Activated CD4-positive, alpha-beta memory T cell treated with anti-CD3 and anti-CD28 coated beads for 36 hours (primary cell): ENCODE measurements at regions of chr19 and their contacts with region 1.

Region 1: GRCh38 chr19:58182989-58183816 is at the start of gene ZNF274:
- DNase-seq: peak; percentile 95
- H3K4me3 Mint-ChIP-seq: peak within 1 kb of the TSS; percentile 92
- H3K27ac Mint-ChIP-seq: peak within 1 kb of the TSS; percentile 99
- H3K4me1 Mint-ChIP-seq: peaks cover 16% of the 10 kb centered on the region
- H3K27me3 Mint-ChIP-seq: no peaks in the 10 kb centered on the region
- total RNA-seq, gene ZNF274: 19.1 to 19.6 TPM

Region 2: DNA sequence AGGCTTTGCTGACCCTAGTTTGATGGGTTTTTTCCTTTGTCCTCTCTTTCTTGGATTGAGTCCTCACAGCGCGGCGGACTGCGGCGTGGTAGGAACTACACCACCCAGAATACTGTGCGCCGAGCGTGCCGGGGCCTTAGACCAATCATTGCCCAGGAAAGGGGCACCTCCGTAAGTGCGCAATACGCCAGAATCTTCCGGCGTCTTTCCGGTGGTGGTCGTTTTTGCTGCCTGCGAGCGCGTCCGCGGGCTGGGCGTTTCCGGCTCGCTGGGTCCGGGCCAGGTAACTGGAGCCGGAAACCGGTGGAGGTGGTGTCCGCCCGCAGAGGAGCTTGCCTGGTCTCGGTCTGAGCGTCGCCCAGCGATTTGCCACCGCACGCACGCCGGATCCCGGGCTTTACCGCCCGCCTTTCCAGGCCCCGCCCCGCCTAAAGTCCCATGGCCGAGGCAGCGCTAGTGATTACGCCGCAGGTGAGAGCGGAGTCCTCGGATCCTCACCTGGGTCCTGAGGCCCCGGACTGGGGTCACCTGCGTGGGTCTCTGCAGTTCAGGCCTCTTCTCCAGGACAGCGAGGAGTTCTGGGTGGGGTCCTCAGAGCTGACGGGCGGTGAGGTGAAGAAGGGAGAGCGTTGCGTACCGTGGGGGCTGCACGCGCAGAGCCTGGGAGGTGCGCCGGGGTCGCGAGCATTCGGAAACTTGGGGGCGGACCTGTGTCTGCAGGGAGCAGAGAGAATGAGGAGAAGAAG is 655.9 kb before region 1 on chr19 and contains the start of gene ZNF549:
- CTCF ChIA-PET with region 1: no interaction called
- POLR2A ChIA-PET with region 1: no interaction called
- intact Hi-C with region 1: loop called (anchors 1 kb)
- DNase-seq: peak; percentile 94
- H3K4me3 Mint-ChIP-seq: peak within 1 kb of the TSS; percentile 85
- H3K27ac Mint-ChIP-seq: peak within 1 kb of the TSS; percentile 54
- H3K4me1 Mint-ChIP-seq: peaks cover 18% of the 10 kb centered on the region
- H3K27me3 Mint-ChIP-seq: no peaks in the 10 kb centered on the region
- total RNA-seq, gene ZNF549: 2.9 to 3.4 TPM

Region 3: GRCh38 chr19:58002384-58003173 is 180.6 kb before region 1 on chr19 and contains the start of gene ZNF606:
- CTCF ChIA-PET with region 1: no interaction called
- POLR2A ChIA-PET with region 1: interaction called, 3 read pairs
- intact Hi-C with region 1: loop called (anchors 10 kb)
- DNase-seq: peak; percentile 88
- H3K4me3 Mint-ChIP-seq: peak within 1 kb of the TSS; percentile 78
- H3K27ac Mint-ChIP-seq: peak within 1 kb of the TSS; percentile 56
- H3K4me1 Mint-ChIP-seq: peaks cover 26% of the 10 kb centered on the region
- H3K27me3 Mint-ChIP-seq: no peaks in the 10 kb centered on the region
- total RNA-seq, gene ZNF606: 5.1 to 5.8 TPM

Region 4: GRCh38 chr19:58212336-58213074 is 29.3 kb after region 1 on chr19:
- CTCF ChIA-PET with region 1: no interaction called
- POLR2A ChIA-PET with region 1: no interaction called
- intact Hi-C with region 1: no loop called
- DNase-seq: no peak
- H3K4me3 Mint-ChIP-seq: no peak overlapping the region
- H3K27ac Mint-ChIP-seq: no peak overlapping the region
- H3K4me1 Mint-ChIP-seq: no peaks in the 10 kb centered on the region
- H3K27me3 Mint-ChIP-seq: no peaks in the 10 kb centered on the region

Region 5: GRCh38 chr19:58228585-58229254 is 45.5 kb after region 1 on chr19 and contains the start of gene ZNF544:
- CTCF ChIA-PET with region 1: no interaction called
- POLR2A ChIA-PET with region 1: interaction called, 4 read pairs
- intact Hi-C with region 1: loop called (anchors 5 kb)
- DNase-seq: peak; percentile 82
- H3K4me3 Mint-ChIP-seq: peak within 1 kb of the TSS; percentile 95
- H3K27ac Mint-ChIP-seq: peak within 1 kb of the TSS; percentile 92
- H3K4me1 Mint-ChIP-seq: peaks cover 32% of the 10 kb centered on the region
- H3K27me3 Mint-ChIP-seq: no peaks in the 10 kb centered on the region
- total RNA-seq, gene ZNF544: 39.6 to 45.4 TPM

Region 6: DNA sequence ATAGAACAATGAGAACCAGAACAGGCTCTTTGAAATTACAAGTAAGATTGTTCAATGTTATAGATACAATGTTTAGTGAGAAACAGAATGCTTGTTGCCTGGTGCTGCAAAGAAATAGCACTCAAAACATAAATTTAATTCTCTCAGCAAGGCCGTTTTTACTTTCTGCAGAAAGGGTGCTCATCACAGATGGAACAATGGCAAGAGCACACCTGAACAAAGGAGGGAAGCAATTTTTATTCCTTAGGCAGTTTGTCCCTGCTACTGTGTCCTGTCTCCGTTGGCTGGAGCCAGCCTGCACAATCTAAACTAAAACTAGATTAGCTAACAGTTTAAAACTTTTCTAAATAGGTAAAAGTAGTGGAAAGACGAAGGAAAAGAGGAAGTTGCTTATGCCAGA is 85.1 kb after region 1 on chr19:
- CTCF ChIA-PET with region 1: no interaction called
- POLR2A ChIA-PET with region 1: no interaction called
- intact Hi-C with region 1: no loop called
- DNase-seq: no peak
- H3K4me3 Mint-ChIP-seq: no peak overlapping the region
- H3K27ac Mint-ChIP-seq: no peak overlapping the region
- H3K4me1 Mint-ChIP-seq: no peaks in the 10 kb centered on the region
- H3K27me3 Mint-ChIP-seq: no peaks in the 10 kb centered on the region